Naive thymus-derived CD8-positive, alpha-beta T cell (primary cell): ENCODE measurements at regions of chr19 and their contacts with region 1.

Region 1: GRCh38 chr19:10835754-10836477 is at the start of gene TMED1:
- DNase-seq: peak; percentile 87 to 97 (median 94)
- ATAC-seq: peak; percentile 90 to 92
- H3K4me3 Mint-ChIP-seq: peak within 1 kb of the TSS; percentile 95 to 100 (median 97)
- H3K27ac Mint-ChIP-seq: peak within 1 kb of the TSS; percentile 98 to 100 (median 100)
- H3K4me1 Mint-ChIP-seq: peaks cover 8 to 16% (median 15%) of the 10 kb centered on the region in 4 donors
- H3K27me3 Mint-ChIP-seq: no peaks in the 10 kb centered on the region
- polyA plus RNA-seq, gene TMED1: 23.7 to 26.3 (median 25.0) TPM

Region 2: GRCh38 chr19:10730923-10731322 is 105.0 kb before region 1 on chr19:
- POLR2A ChIA-PET with region 1: interaction called, 11 read pairs
- DNase-seq: peak in 1 of 10 donors; percentile 10
- ATAC-seq: no peak
- H3K4me3 Mint-ChIP-seq: peak overlapping the region; percentile 19 to 86 (median 76)
- H3K27ac Mint-ChIP-seq: peak overlapping the region; percentile 93 to 99 (median 97)
- H3K4me1 Mint-ChIP-seq: peaks cover 14 to 67% (median 59%) of the 10 kb centered on the region in 4 donors
- H3K27me3 Mint-ChIP-seq: no peaks in the 10 kb centered on the region

Region 3: GRCh38 chr19:10760273-10760944 is 75.5 kb before region 1 on chr19:
- POLR2A ChIA-PET with region 1: interaction called, 12 read pairs
- DNase-seq: peak in 2 of 10 donors; percentile 38 to 39
- ATAC-seq: peak in 1 of 2 donors; percentile 15
- H3K4me3 Mint-ChIP-seq: peak overlapping the region; percentile 64 to 85 (median 81)
- H3K27ac Mint-ChIP-seq: peak overlapping the region; percentile 87 to 98 (median 94)
- H3K4me1 Mint-ChIP-seq: peaks cover 38 to 91% (median 88%) of the 10 kb centered on the region in 4 donors
- H3K27me3 Mint-ChIP-seq: no peaks in the 10 kb centered on the region